ENCODE measurements at regions of chr1 and their contacts with region 1.

Region 1: GRCh38 chr1:110460253-110461220 is 9.6 kb downstream of the PROK1 start:
- DNase-seq: peak; percentile 56 to 88 (median 79)
- H3K4me3 ChIP-seq: no peak overlapping the region
- H3K27ac ChIP-seq: peak overlapping the region in 1 of 59 donors; percentile 8
- H3K27me3 ChIP-seq: peaks cover 0 to 3% (median 0%) of the 10 kb centered on the region in 45 donors
- CTCF ChIP-seq: peak; percentile 86 to 100 (median 97)

Region 2: DNA sequence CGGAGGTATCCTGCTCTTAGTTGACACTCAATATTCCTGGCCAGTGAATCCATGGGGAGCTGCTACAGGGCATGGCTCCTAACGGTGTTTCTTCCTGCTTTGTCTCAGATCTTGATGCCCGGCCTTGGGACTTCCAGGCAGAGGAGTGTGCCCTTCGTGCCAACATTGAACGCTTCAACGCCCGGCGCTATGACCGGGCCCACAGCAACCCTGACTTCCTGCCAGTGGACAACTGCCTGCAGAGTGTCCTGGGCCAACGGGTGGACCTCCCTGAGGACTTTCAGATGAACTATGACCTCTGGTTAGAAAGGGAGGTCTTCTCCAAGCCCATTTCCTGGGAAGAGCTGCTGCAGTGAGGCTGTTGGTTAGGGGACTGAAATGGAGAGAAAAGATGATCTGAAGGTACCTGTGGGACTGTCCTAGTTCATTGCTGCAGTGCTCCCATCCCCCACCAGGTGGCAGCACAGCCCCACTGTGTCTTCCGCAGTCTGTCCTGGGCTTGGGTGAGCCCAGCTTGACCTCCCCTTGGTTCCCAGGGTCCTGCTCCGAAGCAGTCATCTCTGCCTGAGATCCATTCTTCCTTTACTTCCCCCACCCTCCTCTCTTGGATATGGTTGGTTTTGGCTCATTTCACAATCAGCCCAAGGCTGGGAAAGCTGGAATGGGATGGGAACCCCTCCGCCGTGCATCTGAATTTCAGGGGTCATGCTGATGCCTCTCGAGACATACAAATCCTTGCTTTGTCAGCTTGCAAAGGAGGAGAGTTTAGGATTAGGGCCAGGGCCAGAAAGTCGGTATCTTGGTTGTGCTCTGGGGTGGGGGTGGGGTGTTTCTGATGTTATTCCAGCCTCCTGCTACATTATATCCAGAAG is 406.7 kb before region 1 on chr1:
- intact Hi-C with region 1: loop called in 1 of 2 experiments (anchors 10 kb)
- DNase-seq: peak in 9 of 10 donors; percentile 60 to 84 (median 81)
- H3K4me3 ChIP-seq: no peak overlapping the region
- H3K27ac ChIP-seq: peak overlapping the region in 2 of 59 donors; percentile 12 to 13
- H3K27me3 ChIP-seq: no peaks in the 10 kb centered on the region
- CTCF ChIP-seq: peak; percentile 71 to 99 (median 95)

Region 3: GRCh38 chr1:110203021-110203661 is 257.4 kb before region 1 on chr1:
- intact Hi-C with region 1: loop called (anchors 2 to 5 kb)
- DNase-seq: peak in 2 of 10 donors; percentile 67 to 73
- H3K4me3 ChIP-seq: no peak overlapping the region
- H3K27ac ChIP-seq: peak overlapping the region in 13 of 59 donors; percentile 2 to 70 (median 23)
- H3K27me3 ChIP-seq: no peaks in the 10 kb centered on the region
- CTCF ChIP-seq: peak; percentile 75 to 98 (median 89)

Region 4: GRCh38 chr1:110312188-110313121 is 148.1 kb before region 1 on chr1:
- intact Hi-C with region 1: loop called in 1 of 2 experiments (anchors 10 kb)
- DNase-seq: peak; percentile 63 to 95 (median 84)
- H3K4me3 ChIP-seq: peak overlapping the region in 4 of 59 donors; percentile 4 to 21 (median 14)
- H3K27ac ChIP-seq: peak overlapping the region in 22 of 59 donors; percentile 3 to 83 (median 53)
- H3K27me3 ChIP-seq: no peaks in the 10 kb centered on the region
- CTCF ChIP-seq: peak; percentile 71 to 100 (median 96)

Region 5: DNA sequence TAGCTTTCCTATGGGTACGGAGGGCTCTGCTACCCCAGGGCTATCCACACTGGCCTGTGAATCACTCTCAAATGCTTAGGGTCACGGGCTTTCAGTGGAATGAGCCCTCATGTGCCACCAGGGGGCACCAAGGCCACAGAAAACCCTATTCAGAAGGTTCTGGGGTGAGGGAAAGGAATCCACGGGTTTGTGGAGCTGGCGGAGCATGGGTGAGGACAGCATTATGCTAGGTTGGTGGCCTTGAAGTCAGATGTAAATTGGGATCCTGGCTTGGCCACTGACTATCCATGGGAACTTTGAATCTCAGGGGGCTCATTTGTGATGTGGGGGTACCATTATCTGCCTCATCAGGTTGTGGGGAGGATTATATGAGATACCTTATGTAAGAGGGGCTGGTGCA is 48.0 kb before region 1 on chr1:
- intact Hi-C with region 1: loop called (anchors 2 to 5 kb)
- DNase-seq: peak; percentile 41 to 76 (median 57)
- H3K4me3 ChIP-seq: no peak overlapping the region
- H3K27ac ChIP-seq: no peak overlapping the region
- H3K27me3 ChIP-seq: no peaks in the 10 kb centered on the region
- CTCF ChIP-seq: peak; percentile 42 to 85 (median 73)

Region 6: GRCh38 chr1:110619412-110620249 is 159.1 kb after region 1 on chr1:
- intact Hi-C with region 1: loop called in 1 of 2 experiments (anchors 5 kb)
- DNase-seq: peak; percentile 82 to 91 (median 89)
- H3K4me3 ChIP-seq: peak overlapping the region in 41 of 59 donors; percentile 4 to 61 (median 36)
- H3K27ac ChIP-seq: peak overlapping the region in 38 of 59 donors; percentile 8 to 76 (median 51)
- H3K27me3 ChIP-seq: peaks cover 0 to 8% (median 0%) of the 10 kb centered on the region in 45 donors
- CTCF ChIP-seq: peak; percentile 87 to 99 (median 97)

Measured in dorsolateral prefrontal cortex (tissue), 120 donors.